ENCODE measurements at regions of chr18 and their contacts with region 1.

Region 1: GRCh38 chr18:50507120-50507590 is 52.7 kb upstream of the MAPK4 start:
- DNase-seq: peak; percentile 13
- H3K4me3 ChIP-seq: no peak overlapping the region
- H3K27ac ChIP-seq: no peak overlapping the region
- H3K4me1 ChIP-seq: no peaks in the 10 kb centered on the region
- H3K27me3 ChIP-seq: no peaks in the 10 kb centered on the region
- CTCF ChIP-seq: peak; percentile 87 to 99

Region 2: GRCh38 chr18:50644810-50645209 is 137.7 kb after region 1 on chr18:
- CTCF ChIA-PET with region 1: no interaction called
- dilution Hi-C with region 1: no loop called
- in situ Hi-C with region 1: no loop called
- intact Hi-C with region 1: loop called (anchors 1 kb)
- DNase-seq: no peak
- H3K4me3 ChIP-seq: no peak overlapping the region
- H3K27ac ChIP-seq: no peak overlapping the region
- H3K4me1 ChIP-seq: no peaks in the 10 kb centered on the region
- H3K27me3 ChIP-seq: no peaks in the 10 kb centered on the region
- CTCF ChIP-seq: peak; percentile 36 to 56

Region 3: GRCh38 chr18:50780144-50780543 is 273.0 kb after region 1 on chr18:
- CTCF ChIA-PET with region 1: no interaction called
- dilution Hi-C with region 1: no loop called
- in situ Hi-C with region 1: loop called (anchors 5 to 25 kb)
- intact Hi-C with region 1: loop called (anchors 1 kb)
- DNase-seq: no peak
- H3K4me3 ChIP-seq: no peak overlapping the region
- H3K27ac ChIP-seq: no peak overlapping the region
- H3K4me1 ChIP-seq: no peaks in the 10 kb centered on the region
- H3K27me3 ChIP-seq: peaks cover 2% of the 10 kb centered on the region
- CTCF ChIP-seq: no peak

Region 4: DNA sequence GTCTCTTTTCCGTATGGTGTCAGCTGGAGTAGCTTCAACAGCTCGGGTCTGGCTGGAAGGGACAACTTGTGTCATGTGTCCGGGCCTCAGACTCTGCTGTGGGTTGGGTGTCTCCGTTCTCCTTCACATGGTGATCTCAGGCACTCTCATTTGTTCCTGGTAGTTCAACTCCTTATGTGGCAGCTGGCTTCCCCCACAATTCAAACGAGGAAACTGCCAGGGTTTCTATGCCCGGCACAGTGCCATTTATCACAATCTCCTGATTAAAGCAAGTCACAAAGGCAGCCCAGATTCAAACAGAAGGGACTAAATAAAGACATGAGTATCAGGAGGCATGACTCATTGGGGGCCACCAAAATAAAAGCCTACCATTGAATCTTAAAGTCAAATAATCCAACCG is 290.0 kb after region 1 on chr18:
- CTCF ChIA-PET with region 1: no interaction called
- dilution Hi-C with region 1: no loop called
- in situ Hi-C with region 1: loop called in 1 of 2 experiments (anchors 25 kb)
- intact Hi-C with region 1: no loop called
- DNase-seq: no peak
- H3K4me3 ChIP-seq: no peak overlapping the region
- H3K27ac ChIP-seq: no peak overlapping the region
- H3K4me1 ChIP-seq: no peaks in the 10 kb centered on the region
- H3K27me3 ChIP-seq: peaks cover 4% of the 10 kb centered on the region
- CTCF ChIP-seq: no peak

Region 5: GRCh38 chr18:50866765-50867164 is 359.6 kb after region 1 on chr18:
- CTCF ChIA-PET with region 1: no interaction called
- dilution Hi-C with region 1: no loop called
- in situ Hi-C with region 1: no loop called
- intact Hi-C with region 1: loop called (anchors 2 kb)
- DNase-seq: no peak
- H3K4me3 ChIP-seq: no peak overlapping the region
- H3K27ac ChIP-seq: no peak overlapping the region
- H3K4me1 ChIP-seq: peaks cover 32% of the 10 kb centered on the region
- H3K27me3 ChIP-seq: no peaks in the 10 kb centered on the region
- CTCF ChIP-seq: peak; percentile 13 to 29

Measured in mammary epithelial cell (primary cell).